ENCODE measurements at regions of chr20 and their contacts with region 1.

Region 1: DNA sequence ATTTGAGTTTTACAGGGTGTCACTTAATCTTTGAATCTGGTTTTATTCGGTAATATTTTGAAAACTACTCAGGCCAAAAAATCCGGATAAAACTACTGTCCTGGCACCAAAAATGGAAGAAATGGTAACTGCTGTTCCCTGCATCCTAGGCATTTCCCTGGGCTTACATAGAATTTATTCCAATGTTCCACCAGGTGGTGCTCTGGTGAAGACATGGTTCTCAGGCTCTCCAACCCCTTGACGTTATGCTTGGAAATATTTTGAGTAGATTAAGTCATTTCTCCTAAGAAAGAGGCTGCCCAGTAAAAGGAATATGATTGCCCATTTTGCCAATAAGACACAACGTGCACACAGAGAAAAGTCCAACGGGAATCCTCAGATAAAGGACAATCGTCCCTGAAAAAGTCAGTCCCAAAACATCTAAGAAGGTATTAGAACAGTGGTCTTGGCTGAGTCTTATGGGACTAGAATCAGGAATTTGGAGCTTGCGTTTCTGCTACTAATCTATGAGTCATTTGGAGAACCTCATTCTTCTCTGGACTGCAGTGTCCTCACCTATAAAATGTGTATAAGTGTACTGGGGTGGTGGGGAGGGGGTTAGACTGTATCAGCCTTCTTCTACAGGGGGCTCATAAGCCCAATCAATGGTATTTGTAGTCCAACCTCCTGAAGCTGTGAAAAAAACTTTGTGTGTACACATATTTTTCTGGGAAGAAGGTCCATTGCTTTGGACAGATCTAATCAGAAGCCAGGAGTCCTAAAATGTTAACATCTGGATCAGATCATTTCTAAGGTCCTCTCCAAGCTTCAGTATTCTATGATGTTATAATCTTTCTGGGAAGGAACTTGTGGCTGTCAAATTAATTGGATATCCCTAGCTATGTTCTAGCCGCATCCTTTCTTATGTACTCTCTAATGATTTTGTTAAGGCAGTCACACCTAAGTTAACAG is 131.0 kb upstream of the BMP2 start:
- DNase-seq: peak; percentile 51
- H3K4me3 ChIP-seq: no peak overlapping the region
- H3K27ac ChIP-seq: peak overlapping the region; percentile 22
- H3K4me1 ChIP-seq: peaks cover 7% of the 10 kb centered on the region
- H3K27me3 ChIP-seq: no peaks in the 10 kb centered on the region
- CTCF ChIP-seq: peak; percentile 59

Region 2: GRCh38 chr20:6590891-6591631 is 45.4 kb before region 1 on chr20:
- intact Hi-C with region 1: loop called (anchors 5 kb)
- DNase-seq: peak; percentile 52
- H3K4me3 ChIP-seq: no peak overlapping the region
- H3K27ac ChIP-seq: no peak overlapping the region
- H3K4me1 ChIP-seq: no peaks in the 10 kb centered on the region
- H3K27me3 ChIP-seq: no peaks in the 10 kb centered on the region
- CTCF ChIP-seq: no peak

Region 3: GRCh38 chr20:6700563-6701329 is 64.3 kb after region 1 on chr20:
- intact Hi-C with region 1: no loop called
- DNase-seq: no peak
- H3K4me3 ChIP-seq: no peak overlapping the region
- H3K27ac ChIP-seq: no peak overlapping the region
- H3K4me1 ChIP-seq: no peaks in the 10 kb centered on the region
- H3K27me3 ChIP-seq: no peaks in the 10 kb centered on the region
- CTCF ChIP-seq: no peak

Region 4: DNA sequence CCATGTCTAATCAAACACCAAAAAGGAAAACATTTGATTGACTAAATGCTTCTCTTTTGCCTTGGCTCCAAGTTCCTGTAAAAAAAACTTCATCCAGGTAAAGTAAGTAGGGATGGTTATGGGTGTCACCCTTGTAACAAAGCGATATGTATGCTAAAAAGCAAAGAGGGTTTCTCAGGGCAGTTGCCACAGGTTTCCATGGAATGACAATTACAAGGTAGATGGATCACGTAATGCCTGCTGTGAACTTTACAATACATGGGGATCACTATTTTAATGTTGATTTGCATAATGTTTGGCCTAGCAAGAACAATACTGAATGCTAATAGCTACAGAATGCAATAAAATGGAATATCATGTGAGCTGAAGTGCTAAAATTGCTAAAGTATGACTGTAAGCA is 128.1 kb after region 1 on chr20:
- intact Hi-C with region 1: loop called (anchors 5 kb)
- DNase-seq: no peak
- H3K4me3 ChIP-seq: no peak overlapping the region
- H3K27ac ChIP-seq: no peak overlapping the region
- H3K4me1 ChIP-seq: peaks cover 2% of the 10 kb centered on the region
- H3K27me3 ChIP-seq: no peaks in the 10 kb centered on the region
- CTCF ChIP-seq: no peak

Measured in colonic mucosa (tissue), 4 donors.